Activated CD4-positive, alpha-beta memory T cell treated with anti-CD3 and anti-CD28 coated beads for 36 hours (primary cell): ENCODE measurements at regions of chr13 and their contacts with region 1.

Region 1: GRCh38 chr13:30395192-30396084 is 26.9 kb upstream of the UBE2L5 start:
- DNase-seq: peak; percentile 85
- H3K4me3 Mint-ChIP-seq: peak overlapping the region; percentile 81
- H3K27ac Mint-ChIP-seq: peak overlapping the region; percentile 83
- H3K4me1 Mint-ChIP-seq: peaks cover 23% of the 10 kb centered on the region
- H3K27me3 Mint-ChIP-seq: no peaks in the 10 kb centered on the region

Region 2: DNA sequence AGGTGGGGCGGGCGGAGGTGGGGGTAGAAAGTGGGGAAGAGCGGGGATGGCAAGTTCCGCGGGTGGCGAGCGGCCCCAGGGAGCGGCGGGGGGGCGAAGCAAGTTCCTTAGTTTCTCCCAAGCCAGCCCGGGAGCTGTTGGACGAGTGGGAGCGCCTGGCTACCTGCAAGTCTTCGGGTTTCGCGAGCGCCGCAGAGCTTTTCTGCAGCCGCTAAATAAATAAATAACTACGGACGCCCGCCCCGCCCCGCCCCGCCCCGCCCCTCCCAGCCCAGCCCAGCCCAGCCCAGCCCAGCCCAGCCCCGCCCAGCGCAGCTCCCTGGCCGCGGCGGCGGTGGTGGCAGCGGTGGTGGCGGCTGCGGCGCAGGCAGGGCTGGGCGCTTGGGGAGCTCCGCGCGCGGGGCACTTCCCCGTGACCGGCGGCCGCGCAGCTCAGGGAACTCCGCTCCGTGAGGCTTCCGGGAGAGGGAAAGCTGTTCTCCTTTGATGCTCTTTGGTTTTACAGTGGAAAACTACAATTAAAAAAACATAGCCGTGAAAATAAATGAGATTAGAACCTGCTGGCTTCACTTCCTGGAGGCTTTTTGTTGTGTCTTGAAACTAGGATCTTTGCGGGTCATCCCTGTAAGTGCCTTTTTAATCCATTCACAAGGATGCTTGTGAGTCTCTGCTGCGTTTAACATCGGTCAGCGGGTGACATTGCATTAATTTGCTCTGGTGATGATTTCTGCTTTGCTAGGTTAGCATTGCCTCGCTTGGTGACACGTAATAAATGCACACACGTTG is 26.8 kb after region 1 on chr13 and contains the start of gene UBE2L5:
- CTCF ChIA-PET with region 1: interaction called, 4 read pairs
- POLR2A ChIA-PET with region 1: interaction called, 4 read pairs
- intact Hi-C with region 1: loop called (anchors 2 kb)
- DNase-seq: peak; percentile 77
- H3K4me3 Mint-ChIP-seq: peak within 1 kb of the TSS; percentile 86
- H3K27ac Mint-ChIP-seq: peak within 1 kb of the TSS; percentile 80
- H3K4me1 Mint-ChIP-seq: peaks cover 12% of the 10 kb centered on the region
- H3K27me3 Mint-ChIP-seq: no peaks in the 10 kb centered on the region
- total RNA-seq, gene UBE2L5: not detected

Region 3: DNA sequence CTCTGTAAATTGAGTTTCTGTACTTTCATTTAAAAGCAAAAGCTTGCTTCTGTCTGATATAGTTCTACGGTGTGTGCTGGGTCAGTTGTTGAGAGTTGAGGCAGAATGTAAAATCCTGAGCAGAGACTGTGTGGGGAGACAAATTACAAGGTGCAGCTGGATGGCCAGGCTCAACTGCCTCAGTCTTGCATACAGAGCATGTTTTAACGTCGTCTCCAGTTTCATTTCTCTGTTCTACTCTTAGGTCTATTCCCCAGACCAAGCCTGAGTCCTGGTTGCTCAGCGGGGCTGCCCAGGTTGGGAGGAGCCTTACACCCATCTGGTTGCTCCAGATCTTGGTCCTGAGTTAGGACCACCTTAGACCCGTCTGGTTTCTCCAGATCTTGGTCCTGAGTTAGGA is 456.3 kb after region 1 on chr13:
- CTCF ChIA-PET with region 1: no interaction called
- POLR2A ChIA-PET with region 1: no interaction called
- intact Hi-C with region 1: no loop called
- DNase-seq: no peak
- H3K4me3 Mint-ChIP-seq: no peak overlapping the region
- H3K27ac Mint-ChIP-seq: no peak overlapping the region
- H3K4me1 Mint-ChIP-seq: peaks cover 17% of the 10 kb centered on the region
- H3K27me3 Mint-ChIP-seq: peaks cover 9% of the 10 kb centered on the region